Heart left ventricle (tissue), 16 donors: ENCODE measurements at regions of chr10 and their contacts with region 1.

Region 1: DNA sequence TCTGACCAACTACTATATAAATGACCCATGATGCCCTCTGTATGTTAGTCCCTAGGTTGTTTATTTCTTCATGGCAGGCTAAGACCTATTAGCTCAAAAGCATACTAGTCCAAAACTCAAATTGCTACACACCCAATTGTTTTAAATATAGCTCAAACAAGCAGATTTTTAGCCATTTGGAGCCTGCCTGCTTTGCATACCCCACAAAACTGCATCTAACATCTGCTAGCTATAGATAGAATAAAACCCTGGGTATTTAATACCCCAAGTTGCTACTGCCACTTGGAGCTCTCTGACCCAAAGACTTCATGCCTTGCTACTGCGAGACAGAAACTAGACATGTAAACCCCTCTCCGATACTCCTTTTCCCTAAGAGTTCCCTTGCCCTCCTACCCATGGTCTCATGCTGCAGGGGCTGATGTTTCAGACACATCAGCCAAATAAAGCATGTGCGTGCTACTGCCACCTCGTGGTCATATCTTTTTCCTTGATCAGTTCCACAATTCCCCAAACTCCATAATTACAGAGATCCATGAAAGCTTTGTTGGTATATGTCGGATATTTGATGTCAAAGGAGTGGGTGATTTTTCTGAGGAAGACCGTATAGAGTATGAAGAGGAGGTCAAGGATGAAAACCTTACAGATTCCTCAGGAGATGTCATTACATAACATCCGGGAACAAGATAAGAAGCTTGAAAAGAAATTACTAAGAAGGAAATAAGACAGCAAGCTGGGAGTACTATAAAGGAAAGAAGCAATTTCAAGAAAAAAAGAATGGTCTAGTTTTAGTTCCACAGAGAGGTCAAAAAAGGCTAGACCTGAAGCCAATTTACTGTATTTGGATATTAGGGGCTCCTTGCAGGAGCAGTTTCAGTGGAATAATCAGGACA is 386.6 kb downstream of the SH2D4B start:
- DNase-seq: peak in 3 of 5 donors; percentile 27 to 43 (median 32)
- ATAC-seq: peak in 2 of 4 donors; percentile 36 to 49
- H3K4me3 ChIP-seq: no peak overlapping the region
- H3K27ac ChIP-seq: no peak overlapping the region
- H3K4me1 ChIP-seq: no peaks in the 10 kb centered on the region
- H3K27me3 ChIP-seq: peaks cover 0 to 8% (median 0%) of the 10 kb centered on the region in 9 donors
- CTCF ChIP-seq: peak; percentile 60 to 83 (median 67)
- POLR2A ChIP-seq: no peak

Region 2: GRCh38 chr10:80372675-80373074 is 551.6 kb before region 1 on chr10:
- intact Hi-C with region 1: loop called in 1 of 10 experiments (anchors 10 kb)
- DNase-seq: no peak
- ATAC-seq: no peak
- H3K4me3 ChIP-seq: no peak overlapping the region
- H3K27ac ChIP-seq: peak overlapping the region in 1 of 12 donors; percentile 39
- H3K4me1 ChIP-seq: peaks cover 0 to 8% (median 0%) of the 10 kb centered on the region in 12 donors
- H3K27me3 ChIP-seq: no peaks in the 10 kb centered on the region
- CTCF ChIP-seq: no peak
- POLR2A ChIP-seq: no peak

Region 3: GRCh38 chr10:80662577-80663261 is 261.6 kb before region 1 on chr10:
- intact Hi-C with region 1: loop called in 9 of 10 experiments (anchors 1 to 10 kb)
- DNase-seq: peak; percentile 78 to 89 (median 81)
- ATAC-seq: peak; percentile 72 to 88 (median 86)
- H3K4me3 ChIP-seq: peak overlapping the region in 10 of 12 donors; percentile 12 to 53 (median 42)
- H3K27ac ChIP-seq: peak overlapping the region in 11 of 12 donors; percentile 31 to 80 (median 70)
- H3K4me1 ChIP-seq: peaks cover 0 to 38% (median 6%) of the 10 kb centered on the region in 12 donors
- H3K27me3 ChIP-seq: no peaks in the 10 kb centered on the region
- CTCF ChIP-seq: peak; percentile 78 to 95 (median 88)
- POLR2A ChIP-seq: peak in 1 of 2 donors; percentile 11

Region 4: GRCh38 chr10:80669485-80669884 is 254.8 kb before region 1 on chr10:
- intact Hi-C with region 1: loop called in 9 of 10 experiments (anchors 1 to 10 kb)
- DNase-seq: no peak
- ATAC-seq: no peak
- H3K4me3 ChIP-seq: no peak overlapping the region
- H3K27ac ChIP-seq: no peak overlapping the region
- H3K4me1 ChIP-seq: peaks cover 0 to under 1% (median 0%) of the 10 kb centered on the region in 12 donors
- H3K27me3 ChIP-seq: no peaks in the 10 kb centered on the region
- CTCF ChIP-seq: no peak
- POLR2A ChIP-seq: no peak

Region 5: GRCh38 chr10:80699602-80700039 is 224.7 kb before region 1 on chr10:
- intact Hi-C with region 1: loop called in 9 of 10 experiments (anchors 1 to 10 kb)
- DNase-seq: peak; percentile 76 to 93 (median 80)
- ATAC-seq: peak; percentile 69 to 91 (median 84)
- H3K4me3 ChIP-seq: no peak overlapping the region
- H3K27ac ChIP-seq: no peak overlapping the region
- H3K4me1 ChIP-seq: peaks cover 0 to 8% (median 0%) of the 10 kb centered on the region in 12 donors
- H3K27me3 ChIP-seq: peaks cover 0 to 3% (median 0%) of the 10 kb centered on the region in 9 donors
- CTCF ChIP-seq: peak; percentile 69 to 87 (median 82)
- POLR2A ChIP-seq: no peak